ENCODE measurements at regions of chr4 and their contacts with region 1.

Region 1: GRCh38 chr4:145234091-145234706 is 53.8 kb upstream of the OTUD4 start:
- DNase-seq: peak; percentile 75
- H3K4me3 ChIP-seq: no peak overlapping the region
- H3K27ac ChIP-seq: no peak overlapping the region
- H3K4me1 ChIP-seq: no peaks in the 10 kb centered on the region
- H3K27me3 ChIP-seq: no peaks in the 10 kb centered on the region
- CTCF ChIP-seq: peak; percentile 79

Region 2: DNA sequence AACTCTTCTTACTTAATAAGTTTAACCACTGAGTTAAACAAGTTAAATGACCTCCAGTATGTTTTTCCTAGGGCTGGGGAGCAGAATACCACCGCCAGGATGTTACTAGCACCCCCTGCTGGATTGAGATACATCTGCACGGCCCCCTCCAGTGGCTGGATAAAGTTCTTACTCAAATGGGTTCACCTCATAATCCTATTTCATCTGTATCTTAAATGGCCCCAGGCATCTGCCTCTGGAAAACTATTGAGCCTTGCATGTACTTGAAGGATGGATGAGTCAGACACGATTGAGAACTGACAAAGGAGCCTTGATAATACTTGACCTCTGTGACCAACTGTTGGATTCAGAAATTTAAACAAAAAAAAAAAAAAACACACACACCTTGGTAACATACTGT is 323.5 kb after region 1 on chr4:
- CTCF ChIA-PET with region 1: interaction called, 11 read pairs
- POLR2A ChIA-PET with region 1: no interaction called
- intact Hi-C with region 1: loop called (anchors 2 kb)
- DNase-seq: peak; percentile 81
- H3K4me3 ChIP-seq: no peak overlapping the region
- H3K27ac ChIP-seq: no peak overlapping the region
- H3K4me1 ChIP-seq: no peaks in the 10 kb centered on the region
- H3K27me3 ChIP-seq: no peaks in the 10 kb centered on the region
- CTCF ChIP-seq: peak; percentile 93

Region 3: GRCh38 chr4:145609481-145610427 is 375.6 kb after region 1 on chr4:
- CTCF ChIA-PET with region 1: interaction called, 4 read pairs
- POLR2A ChIA-PET with region 1: no interaction called
- intact Hi-C with region 1: loop called (anchors 2 kb)
- DNase-seq: peak; percentile 78
- H3K4me3 ChIP-seq: no peak overlapping the region
- H3K27ac ChIP-seq: no peak overlapping the region
- H3K4me1 ChIP-seq: no peaks in the 10 kb centered on the region
- H3K27me3 ChIP-seq: no peaks in the 10 kb centered on the region
- CTCF ChIP-seq: peak; percentile 88

Measured in A673 (cell line).